AG04450 (cell line): ENCODE measurements at regions of chr1 and their contacts with region 1.

Region 1: DNA sequence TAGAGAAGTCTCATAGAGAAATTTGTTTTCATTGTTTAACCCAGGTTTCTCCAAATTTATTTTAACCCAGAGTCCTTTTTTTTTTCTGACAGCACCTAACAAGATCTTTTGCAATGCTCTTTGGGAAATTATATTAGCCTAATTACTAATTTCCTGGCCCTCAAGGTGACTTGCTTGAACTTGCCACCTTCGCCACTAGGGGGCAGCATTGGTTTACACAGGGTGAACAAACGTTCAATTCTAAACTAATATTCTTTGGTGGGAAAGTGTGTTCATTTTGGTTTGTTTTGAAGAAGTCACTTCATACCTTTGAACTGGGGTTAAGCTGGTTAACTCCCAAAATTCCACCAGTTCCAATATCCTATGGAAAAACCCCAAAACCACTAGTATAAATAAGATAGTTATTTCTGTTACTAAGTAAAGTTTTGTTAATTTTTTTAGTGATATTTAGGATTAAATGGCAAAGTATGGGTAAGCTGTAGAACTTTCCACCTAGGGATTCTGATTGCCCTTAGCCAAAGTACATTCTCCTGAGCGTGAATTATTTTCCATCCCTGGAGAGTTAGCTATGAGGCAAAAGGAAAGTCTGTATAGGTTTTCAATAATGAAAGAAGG is 13.0 kb downstream of the CCDC190 start:
- DNase-seq: peak; percentile 67
- H3K4me3 ChIP-seq: no peak overlapping the region
- H3K27ac ChIP-seq: no peak overlapping the region
- H3K27me3 ChIP-seq: no peaks in the 10 kb centered on the region
- CTCF ChIP-seq: peak; percentile 91

Region 2: DNA sequence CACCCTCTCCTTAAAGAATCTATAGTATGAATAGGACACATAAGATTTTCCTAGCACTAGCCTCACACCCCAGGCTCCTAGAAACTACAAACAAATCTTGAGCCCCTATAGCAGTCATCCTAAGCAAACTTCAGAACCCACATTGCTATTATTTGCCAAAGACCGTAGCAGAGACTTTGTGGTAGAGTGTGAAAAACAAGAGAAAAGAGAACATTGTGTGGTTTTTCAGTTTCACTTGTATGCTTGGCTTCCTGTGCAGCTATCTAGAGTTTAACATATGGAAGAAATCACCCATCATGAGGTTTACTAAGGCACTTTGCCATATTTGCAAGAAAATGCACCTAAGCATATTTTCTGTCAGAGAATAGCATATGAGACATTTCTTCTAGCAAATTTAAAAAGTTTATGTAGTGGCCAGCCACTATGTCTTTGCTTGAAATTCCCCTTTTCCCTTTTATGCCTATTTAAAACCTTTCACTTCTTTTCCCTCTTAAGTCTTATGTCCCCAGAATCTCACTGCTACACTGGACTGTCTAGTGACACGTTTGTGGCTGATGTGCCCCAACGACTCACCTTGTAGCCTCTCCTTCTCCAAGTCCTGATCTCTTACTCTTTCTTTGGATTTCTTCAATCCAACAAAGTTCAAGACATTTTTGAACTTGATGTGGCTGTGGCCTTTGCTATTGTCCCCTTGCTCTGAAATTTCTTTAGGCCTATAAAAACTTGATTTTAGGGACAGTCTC is 12.6 kb before region 1 on chr1:
- CTCF ChIA-PET with region 1: interaction called, 16 read pairs
- POLR2A ChIA-PET with region 1: no interaction called
- DNase-seq: no peak
- H3K4me3 ChIP-seq: no peak overlapping the region
- H3K27ac ChIP-seq: no peak overlapping the region
- H3K27me3 ChIP-seq: peaks cover 7% of the 10 kb centered on the region
- CTCF ChIP-seq: no peak

Region 3: DNA sequence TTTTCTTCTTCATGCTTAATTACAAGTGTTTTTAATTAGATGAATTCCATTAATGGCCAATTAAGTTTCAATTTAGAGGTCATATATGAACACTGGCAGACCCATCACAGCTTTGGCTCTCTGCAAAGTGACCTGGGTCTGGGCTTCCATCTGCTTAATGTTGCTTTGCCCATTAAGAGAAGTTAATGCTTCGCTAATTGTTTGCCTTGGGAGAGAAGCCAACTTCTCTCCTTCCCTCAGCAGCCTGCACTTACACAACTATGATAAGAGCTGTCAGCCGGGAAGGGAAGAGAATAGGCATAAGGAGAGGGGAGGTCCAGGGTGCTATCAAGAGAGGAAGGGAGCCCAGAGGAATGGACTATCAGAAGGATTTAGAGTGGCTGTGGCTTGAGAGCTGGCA is 42.0 kb after region 1 on chr1:
- CTCF ChIA-PET with region 1: interaction called, 11 read pairs
- POLR2A ChIA-PET with region 1: no interaction called
- DNase-seq: no peak
- H3K4me3 ChIP-seq: no peak overlapping the region
- H3K27ac ChIP-seq: no peak overlapping the region
- H3K27me3 ChIP-seq: no peaks in the 10 kb centered on the region
- CTCF ChIP-seq: no peak

Region 4: GRCh38 chr1:162973381-162973795 is 125.4 kb after region 1 on chr1:
- CTCF ChIA-PET with region 1: no interaction called
- POLR2A ChIA-PET with region 1: no interaction called
- DNase-seq: no peak
- H3K4me3 ChIP-seq: no peak overlapping the region
- H3K27ac ChIP-seq: no peak overlapping the region
- H3K27me3 ChIP-seq: no peaks in the 10 kb centered on the region
- CTCF ChIP-seq: no peak

Region 5: GRCh38 chr1:163315773-163316374 is 467.9 kb after region 1 on chr1:
- CTCF ChIA-PET with region 1: interaction called, 106 read pairs
- POLR2A ChIA-PET with region 1: no interaction called
- DNase-seq: no peak
- H3K4me3 ChIP-seq: no peak overlapping the region
- H3K27ac ChIP-seq: no peak overlapping the region
- H3K27me3 ChIP-seq: no peaks in the 10 kb centered on the region
- CTCF ChIP-seq: peak; percentile 60